Motor neuron (in vitro differentiated cells): ENCODE measurements at regions of chr18 and their contacts with region 1.

Region 1: DNA sequence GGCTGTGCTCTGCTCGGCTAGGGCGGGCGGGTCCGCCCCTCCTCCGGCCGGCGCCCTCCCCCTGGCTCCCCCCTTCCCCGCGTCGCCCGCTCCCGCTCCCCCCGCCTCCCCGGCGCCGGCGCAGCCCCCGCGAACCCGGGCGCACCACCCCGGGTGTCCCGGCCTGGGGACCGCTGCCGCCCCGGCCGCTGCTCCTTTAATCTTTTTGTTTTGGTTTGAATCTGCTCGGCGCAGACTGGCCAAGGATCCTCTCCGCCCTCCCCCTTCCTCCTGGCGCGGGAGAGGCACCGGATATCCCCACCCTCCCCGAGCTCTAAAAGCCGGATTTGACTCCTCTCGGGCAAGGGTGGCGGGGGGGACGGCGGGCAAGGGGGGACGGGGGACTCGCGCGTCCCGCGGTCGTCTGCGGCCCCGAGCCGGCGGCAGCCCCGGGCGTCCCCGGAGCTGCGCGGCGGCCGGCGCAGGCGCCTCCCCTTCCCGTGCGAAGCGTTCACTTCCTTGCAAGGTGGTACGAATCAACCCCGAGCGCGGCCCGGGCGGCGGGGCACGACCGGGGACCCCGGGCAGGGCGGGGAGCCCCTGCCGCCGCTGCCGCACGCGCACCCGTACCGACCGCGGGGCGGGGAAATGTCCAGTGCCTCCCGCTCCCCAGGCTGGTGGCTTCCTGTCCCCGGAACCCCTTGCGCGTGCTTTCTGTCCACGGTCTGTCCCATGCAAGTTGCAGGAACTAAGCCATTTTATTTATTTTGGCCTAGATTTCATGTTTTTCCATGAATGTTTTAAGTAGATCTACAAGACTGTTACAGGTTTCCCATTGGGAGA is at the start of gene PTGR3:
- ATAC-seq: peak; percentile 41 to 68 (median 62)
- H3K4me3 ChIP-seq: peak within 1 kb of the TSS; percentile 75 to 96 (median 78)
- H3K27ac ChIP-seq: peak within 1 kb of the TSS; percentile 94 to 96
- H3K4me1 ChIP-seq: peaks cover 0 to 8% of the 10 kb centered on the region in 2 donors
- total RNA-seq, gene PTGR3: 9.0 to 41.9 (median 25.4) TPM

Region 2: DNA sequence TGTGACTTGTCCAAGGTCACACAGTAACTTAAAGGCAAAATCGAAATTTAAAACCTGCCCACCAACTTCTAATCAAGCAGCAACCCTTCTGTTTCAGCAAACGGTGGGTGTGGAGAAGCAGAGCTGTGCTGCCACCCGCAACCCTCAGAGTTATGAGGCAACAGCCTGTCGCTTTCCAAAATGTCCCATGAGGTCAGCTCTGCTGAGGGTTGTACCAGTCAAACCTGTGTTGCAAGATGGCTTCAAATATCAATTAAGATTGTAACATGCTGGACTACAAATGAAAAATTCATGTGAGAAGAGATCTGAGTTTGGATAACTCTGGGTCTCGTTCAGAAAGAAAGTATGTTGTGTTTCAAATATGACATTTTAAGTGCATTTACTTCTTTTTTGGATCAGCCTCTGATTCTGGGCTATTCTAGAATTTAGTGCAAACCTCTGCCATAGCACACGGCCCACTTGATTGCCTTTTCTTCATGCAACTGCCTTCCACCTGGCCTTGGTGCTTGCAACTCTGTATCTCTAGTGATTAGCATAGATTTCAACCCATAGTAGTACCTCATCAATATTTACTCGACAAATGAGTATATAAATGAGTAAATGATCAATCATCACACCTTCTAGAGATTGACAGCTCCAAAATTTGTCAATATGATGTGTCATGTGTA is 991.7 kb before region 1 on chr18:
- in situ Hi-C with region 1: no loop called
- ATAC-seq: no peak
- H3K4me3 ChIP-seq: no peak overlapping the region
- H3K27ac ChIP-seq: no peak overlapping the region
- H3K4me1 ChIP-seq: no peaks in the 10 kb centered on the region

Region 3: DNA sequence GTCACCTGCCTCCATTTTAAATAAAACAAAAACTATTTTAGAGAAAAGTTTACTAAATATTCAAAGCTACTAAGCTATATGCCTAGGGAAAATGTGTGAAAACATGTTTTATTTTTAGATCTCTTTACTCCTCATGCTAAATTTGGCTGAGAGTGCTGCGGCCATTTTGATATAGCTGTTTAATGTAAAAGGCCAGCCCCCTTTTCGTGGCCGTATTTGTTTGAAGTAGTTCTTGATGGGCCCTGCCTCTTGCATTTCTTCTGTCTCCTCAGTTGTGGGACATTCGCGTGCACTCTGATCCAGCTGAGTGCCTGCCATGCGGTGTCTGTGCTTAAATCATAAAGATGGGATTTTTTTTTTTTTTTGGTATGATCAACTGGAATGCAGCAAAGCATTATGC is 547.6 kb before region 1 on chr18:
- in situ Hi-C with region 1: loop called in 4 of 9 experiments (anchors 10 to 25 kb)
- ATAC-seq: peak in 1 of 8 experiments; percentile 57
- H3K4me3 ChIP-seq: no peak overlapping the region
- H3K27ac ChIP-seq: no peak overlapping the region
- H3K4me1 ChIP-seq: peaks cover 9 to 21% of the 10 kb centered on the region in 2 donors

Region 4: DNA sequence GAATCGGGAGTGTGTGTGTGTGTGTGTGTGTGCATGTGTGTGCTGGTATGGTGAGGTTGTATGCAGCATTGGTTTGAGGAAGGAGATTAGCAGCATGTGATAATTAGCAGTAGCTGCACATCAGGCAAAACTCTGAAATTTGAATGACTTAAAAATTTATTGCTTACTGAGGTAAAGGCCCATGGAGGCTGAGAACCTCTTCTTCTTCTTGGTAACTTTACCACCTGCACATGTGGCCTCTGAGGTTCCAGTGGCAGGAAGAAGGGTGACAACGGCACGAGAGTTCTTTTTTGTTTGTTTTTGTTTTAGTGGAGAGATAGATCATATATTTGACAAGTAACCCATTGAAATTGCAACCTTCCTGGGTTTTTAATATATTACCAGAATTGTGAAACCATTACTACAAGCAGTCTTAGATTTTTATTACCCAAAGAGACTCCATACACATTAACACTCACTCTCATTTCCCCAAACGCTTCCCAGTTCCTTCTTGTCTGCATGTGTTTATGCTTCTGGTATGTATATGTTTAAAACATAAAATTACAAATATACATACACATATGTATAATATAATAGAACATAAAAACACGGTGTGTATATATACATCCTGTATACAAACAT is 292.5 kb before region 1 on chr18:
- in situ Hi-C with region 1: no loop called
- ATAC-seq: no peak
- H3K4me3 ChIP-seq: no peak overlapping the region
- H3K27ac ChIP-seq: no peak overlapping the region
- H3K4me1 ChIP-seq: peaks cover 0 to 5% of the 10 kb centered on the region in 2 donors

Region 5: GRCh38 chr18:75455249-75456198 is 246.2 kb after region 1 on chr18:
- in situ Hi-C with region 1: loop called in 1 of 9 experiments (anchors 25 kb)
- ATAC-seq: peak; percentile 71 to 92 (median 86)
- H3K4me3 ChIP-seq: peak overlapping the region; percentile 27 to 40 (median 34)
- H3K27ac ChIP-seq: peak overlapping the region; percentile 60 to 78
- H3K4me1 ChIP-seq: peaks cover 23 to 24% of the 10 kb centered on the region in 2 donors

Region 6: DNA sequence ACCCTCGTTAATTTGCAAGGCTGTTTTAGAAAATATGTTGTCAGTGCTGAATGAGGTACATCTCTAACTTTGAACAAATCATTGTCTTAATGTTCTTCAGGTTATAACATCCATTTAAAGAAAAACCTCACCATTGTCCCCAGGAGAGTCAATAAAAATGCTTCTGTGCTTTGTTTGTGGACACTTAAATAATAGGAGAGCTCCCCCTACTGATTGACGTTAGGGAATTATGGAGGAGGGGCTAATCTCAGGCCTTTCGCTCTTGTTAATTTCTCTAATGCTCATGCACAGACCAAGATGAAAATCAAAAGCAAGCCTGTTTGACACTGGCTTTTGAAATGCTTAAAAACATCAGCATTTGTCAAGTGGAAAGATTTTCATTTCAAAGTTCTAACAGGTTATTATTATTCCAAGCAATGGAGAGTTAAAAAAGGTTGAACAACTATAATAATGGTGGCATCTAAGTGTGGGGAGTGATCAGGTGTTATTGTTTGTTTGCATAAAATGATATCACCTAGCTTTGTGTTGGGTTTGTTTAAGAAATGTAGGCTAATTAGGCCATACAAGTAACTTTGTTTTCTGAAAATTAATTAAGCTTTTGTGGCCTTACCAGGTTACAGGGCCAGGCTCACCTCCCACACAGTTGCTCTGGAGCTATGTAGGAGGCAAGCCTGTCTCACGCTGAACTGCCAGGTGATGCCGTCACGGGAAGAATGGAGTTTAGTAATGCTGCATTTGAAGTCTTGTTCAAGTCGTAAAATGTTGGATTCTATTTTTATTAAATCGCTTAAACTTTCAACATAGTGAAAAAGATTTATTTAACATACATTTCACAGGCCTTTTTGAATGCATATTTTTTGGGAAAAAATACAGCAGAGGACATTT is 269.9 kb after region 1 on chr18:
- in situ Hi-C with region 1: loop called in 2 of 9 experiments (anchors 25 kb)
- ATAC-seq: peak; percentile 63 to 87 (median 80)
- H3K4me3 ChIP-seq: no peak overlapping the region
- H3K27ac ChIP-seq: no peak overlapping the region
- H3K4me1 ChIP-seq: peaks cover 0 to 20% of the 10 kb centered on the region in 2 donors

Region 7: DNA sequence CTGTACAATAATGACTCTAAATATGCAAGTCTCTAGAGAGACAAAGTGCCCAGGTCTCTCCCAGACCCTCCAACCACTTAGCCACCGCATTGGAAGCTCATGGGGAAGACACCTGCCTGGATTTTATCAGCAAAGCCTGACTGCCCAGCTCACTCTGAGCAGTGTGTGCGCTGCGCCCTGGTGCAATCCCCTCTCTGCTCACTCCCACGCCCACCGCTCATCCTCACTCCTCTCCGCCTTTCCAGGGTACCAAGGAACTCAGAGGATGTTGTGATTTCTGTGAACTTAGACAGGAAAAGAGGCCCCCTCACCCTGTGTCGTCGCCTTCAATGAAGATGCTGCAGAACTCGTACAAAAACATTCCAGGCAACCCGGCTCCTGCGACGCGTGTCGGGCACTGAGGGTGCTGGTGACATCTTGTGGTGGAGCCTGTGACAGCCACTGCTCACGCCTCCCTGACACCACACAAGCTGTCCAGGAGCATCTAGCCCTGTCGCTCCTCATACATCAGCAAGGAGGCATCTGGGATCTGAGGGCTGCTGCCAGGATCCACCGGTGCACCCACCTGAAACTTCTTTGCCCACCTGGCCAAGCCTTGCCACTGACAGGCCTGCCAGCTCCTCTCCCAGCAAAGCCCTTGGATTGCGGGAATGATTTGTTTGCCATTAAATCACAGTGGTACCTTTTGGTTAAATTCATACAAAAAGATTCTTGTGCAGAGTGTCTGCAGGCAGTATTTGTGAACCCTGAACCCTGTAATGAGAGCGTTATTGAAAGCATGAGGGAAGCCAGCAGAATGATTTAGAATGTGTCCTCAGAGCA is 1065.3 kb after region 1 on chr18:
- in situ Hi-C with region 1: loop called in 1 of 9 experiments (anchors 25 kb)
- ATAC-seq: peak; percentile 57 to 100 (median 99)
- H3K4me3 ChIP-seq: no peak overlapping the region
- H3K27ac ChIP-seq: peak overlapping the region in 1 of 2 donors; percentile 41
- H3K4me1 ChIP-seq: peaks cover 7 to 26% of the 10 kb centered on the region in 2 donors